ENCODE measurements at regions of chr4 and their contacts with region 1.

Region 1: GRCh38 chr4:57917677-57918076 is 807.5 kb upstream of the IGFBP7 start:
- DNase-seq: no peak
- H3K4me3 ChIP-seq: no peak overlapping the region
- H3K27ac ChIP-seq: no peak overlapping the region
- H3K4me1 ChIP-seq: no peaks in the 10 kb centered on the region
- H3K27me3 ChIP-seq: no peaks in the 10 kb centered on the region
- CTCF ChIP-seq: no peak
- EP300 ChIP-seq: no peak
- POLR2A ChIP-seq: no peak

Region 2: GRCh38 chr4:57734104-57734670 is 183.5 kb before region 1 on chr4:
- intact Hi-C with region 1: no loop called
- DNase-seq: no peak
- H3K4me3 ChIP-seq: no peak overlapping the region
- H3K27ac ChIP-seq: no peak overlapping the region
- H3K4me1 ChIP-seq: no peaks in the 10 kb centered on the region
- H3K27me3 ChIP-seq: no peaks in the 10 kb centered on the region
- CTCF ChIP-seq: no peak
- EP300 ChIP-seq: no peak
- POLR2A ChIP-seq: no peak

Region 3: DNA sequence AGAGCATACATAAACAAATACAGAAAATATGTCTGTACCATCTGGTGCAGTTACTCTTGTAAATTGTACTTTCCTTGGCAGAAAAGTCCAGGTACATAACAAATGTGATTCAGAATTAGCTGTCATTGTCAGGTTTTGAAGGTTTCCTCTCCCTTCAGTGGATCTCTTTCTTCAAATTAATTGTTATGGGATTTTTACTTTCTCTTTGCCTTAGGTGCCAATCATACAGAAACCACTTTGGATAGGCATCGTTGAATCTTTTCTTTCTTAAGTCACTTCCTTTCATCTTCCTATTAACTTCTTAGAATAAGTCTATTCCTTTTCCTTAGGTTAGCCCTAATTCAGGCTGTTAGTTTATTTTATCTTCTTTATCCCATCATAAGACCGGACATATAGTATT is 1184.6 kb after region 1 on chr4:
- intact Hi-C with region 1: loop called in 1 of 4 experiments (anchors 5 kb)
- DNase-seq: no peak
- H3K4me3 ChIP-seq: no peak overlapping the region
- H3K27ac ChIP-seq: no peak overlapping the region
- H3K4me1 ChIP-seq: no peaks in the 10 kb centered on the region
- H3K27me3 ChIP-seq: no peaks in the 10 kb centered on the region
- CTCF ChIP-seq: no peak
- EP300 ChIP-seq: no peak
- POLR2A ChIP-seq: no peak